Lower leg skin (tissue), 4 donors: ENCODE measurements at regions of chr9 and their contacts with region 1.

Region 1: DNA sequence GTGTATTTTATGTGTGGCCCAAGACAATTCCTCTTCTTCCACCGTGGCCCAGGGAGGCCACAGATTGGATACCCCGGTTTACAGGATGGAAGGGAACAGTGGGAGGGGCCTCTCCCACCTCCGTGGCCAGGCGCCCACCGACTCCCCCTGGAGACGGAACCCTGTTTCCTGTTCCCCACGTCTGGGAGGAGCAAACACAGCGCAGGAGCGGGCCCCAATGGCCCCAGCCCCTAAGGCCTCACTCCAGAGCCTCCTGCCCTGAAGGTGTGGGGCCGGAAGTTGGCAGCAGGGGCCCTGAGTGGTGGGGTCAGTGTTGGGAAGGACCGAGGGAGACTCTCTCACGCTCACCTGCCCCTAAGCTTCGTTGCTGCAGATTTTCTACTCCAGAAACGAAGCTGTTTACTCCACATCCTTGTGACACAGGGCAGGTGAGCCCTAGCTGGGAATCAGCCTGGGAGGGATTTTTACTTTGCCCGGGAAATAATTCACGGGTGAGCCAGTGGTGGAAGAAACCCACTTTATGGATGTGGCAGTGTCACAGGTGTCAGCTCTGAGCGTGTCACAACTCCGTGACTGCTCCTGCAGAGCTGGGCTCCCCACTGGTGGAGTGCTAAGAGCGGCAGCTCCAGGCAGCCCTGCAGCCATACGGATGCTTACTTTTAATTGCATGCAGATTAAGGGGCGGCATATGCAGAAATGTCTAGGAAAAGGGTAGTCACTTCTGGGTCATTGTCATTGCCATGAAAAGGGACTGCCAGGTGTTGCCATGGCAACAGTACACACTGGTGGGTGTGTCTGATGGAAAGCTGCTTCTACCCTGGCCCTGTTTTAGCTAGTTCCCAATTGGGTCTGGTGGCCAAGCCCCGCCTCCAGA is 77.5 kb upstream of the OLFM1 start:
- DNase-seq: no peak
- H3K4me3 ChIP-seq: no peak overlapping the region
- CTCF ChIP-seq: no peak
- POLR2A ChIP-seq: no peak

Region 2: DNA sequence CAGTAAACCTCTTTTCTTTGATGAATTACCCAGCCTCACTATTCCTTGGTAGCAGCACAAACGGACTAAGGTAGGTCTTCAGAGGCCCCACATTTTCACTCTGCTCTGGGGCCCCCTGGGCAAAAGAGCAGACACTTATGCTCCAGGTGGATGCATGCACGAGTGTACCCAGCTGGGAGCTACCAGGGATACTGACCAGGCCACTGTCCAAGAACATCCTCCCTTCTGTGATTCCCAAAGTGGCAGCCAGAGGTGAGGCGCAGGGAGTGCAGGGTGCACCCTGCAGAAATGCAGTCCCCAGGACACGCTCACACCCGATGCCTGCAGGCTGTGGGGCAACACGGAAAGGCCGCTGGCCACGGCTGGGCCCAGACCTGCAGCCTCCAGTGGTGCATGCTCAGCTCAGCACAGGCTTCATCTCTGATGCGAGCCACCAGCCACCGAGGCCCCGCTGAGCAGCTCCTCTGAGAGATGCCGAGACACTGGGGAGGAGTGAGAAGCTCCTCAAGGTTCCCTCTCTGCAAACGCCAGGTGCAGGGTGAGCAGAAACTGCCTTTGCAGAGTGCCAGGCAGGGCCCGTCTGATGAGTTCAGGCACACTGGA is 29.4 kb after region 1 on chr9:
- intact Hi-C with region 1: loop called (anchors 1 kb)
- DNase-seq: peak in 1 of 2 donors; percentile 66
- H3K4me3 ChIP-seq: no peak overlapping the region
- CTCF ChIP-seq: no peak
- POLR2A ChIP-seq: no peak